ENCODE measurements at regions of chr7 and their contacts with region 1.

Region 1: GRCh38 chr7:114922016-114922651 is at the start of gene MDFIC:
- DNase-seq: peak; percentile 72
- H3K4me3 ChIP-seq: peak within 1 kb of the TSS; percentile 75 to 89 (median 84)
- H3K27ac ChIP-seq: peak within 1 kb of the TSS; percentile 84 to 93 (median 88)
- H3K4me1 ChIP-seq: peaks cover 0 to 38% (median 32%) of the 10 kb centered on the region in 4 donors
- H3K27me3 ChIP-seq: no peaks in the 10 kb centered on the region
- CTCF ChIP-seq: no peak
- EP300 ChIP-seq: no peak
- POLR2A ChIP-seq: peak; percentile 14 to 33
- total RNA-seq, gene MDFIC: 33.0 to 58.1 (median 51.1) TPM

Region 2: GRCh38 chr7:114589436-114589835 is 332.7 kb before region 1 on chr7:
- intact Hi-C with region 1: no loop called
- DNase-seq: no peak
- H3K4me3 ChIP-seq: no peak overlapping the region
- H3K27ac ChIP-seq: no peak overlapping the region
- H3K4me1 ChIP-seq: peaks cover 0 to 8% (median 2%) of the 10 kb centered on the region in 4 donors
- H3K27me3 ChIP-seq: no peaks in the 10 kb centered on the region
- CTCF ChIP-seq: no peak
- EP300 ChIP-seq: no peak
- POLR2A ChIP-seq: no peak

Region 3: GRCh38 chr7:115008465-115009114 is 86.5 kb after region 1 on chr7:
- intact Hi-C with region 1: loop called (anchors 5 kb)
- DNase-seq: peak; percentile 83
- H3K4me3 ChIP-seq: no peak overlapping the region
- H3K27ac ChIP-seq: peak overlapping the region; percentile 48 to 72 (median 55)
- H3K4me1 ChIP-seq: peaks cover 0 to 34% (median 32%) of the 10 kb centered on the region in 4 donors
- H3K27me3 ChIP-seq: no peaks in the 10 kb centered on the region
- CTCF ChIP-seq: no peak
- EP300 ChIP-seq: no peak
- POLR2A ChIP-seq: no peak

Region 4: GRCh38 chr7:115127399-115128021 is 205.4 kb after region 1 on chr7:
- intact Hi-C with region 1: loop called (anchors 5 kb)
- DNase-seq: no peak
- H3K4me3 ChIP-seq: no peak overlapping the region
- H3K27ac ChIP-seq: peak overlapping the region in 1 of 4 donors; percentile 20
- H3K4me1 ChIP-seq: peaks cover 0 to 20% (median 16%) of the 10 kb centered on the region in 4 donors
- H3K27me3 ChIP-seq: no peaks in the 10 kb centered on the region
- CTCF ChIP-seq: no peak
- EP300 ChIP-seq: no peak
- POLR2A ChIP-seq: no peak

Region 5: DNA sequence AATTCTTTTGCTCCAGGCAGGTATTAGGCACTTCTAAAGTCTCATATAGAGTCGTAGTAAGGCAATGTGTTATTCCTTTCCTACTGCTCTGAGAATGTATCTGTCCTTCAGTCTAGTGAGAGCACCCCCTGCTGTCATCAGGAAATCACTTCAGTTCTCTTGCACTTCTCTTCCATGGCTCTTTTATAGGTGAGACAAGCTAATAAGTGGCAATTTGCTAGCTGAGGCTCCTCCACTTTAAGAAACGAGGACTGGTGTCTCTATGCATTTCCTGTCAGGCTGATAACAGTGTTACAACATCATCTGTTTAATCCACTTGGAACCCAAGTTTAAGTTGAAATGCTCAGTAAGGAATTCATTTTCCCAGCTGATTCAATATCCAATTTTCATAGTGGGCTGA is 757.8 kb after region 1 on chr7:
- intact Hi-C with region 1: loop called (anchors 10 kb)
- DNase-seq: no peak
- H3K4me3 ChIP-seq: no peak overlapping the region
- H3K27ac ChIP-seq: no peak overlapping the region
- H3K4me1 ChIP-seq: peaks cover 0 to 35% (median 15%) of the 10 kb centered on the region in 4 donors
- H3K27me3 ChIP-seq: no peaks in the 10 kb centered on the region
- CTCF ChIP-seq: peak in 1 of 4 experiments; percentile 26
- EP300 ChIP-seq: no peak
- POLR2A ChIP-seq: no peak